GM10248 (cell line): ENCODE measurements at regions of chr3 and their contacts with region 1.

Region 1: GRCh38 chr3:100089812-100090668 is 24.3 kb downstream of the FILIP1L start:
- DNase-seq: peak; percentile 35
- CTCF ChIP-seq: no peak

Region 2: DNA sequence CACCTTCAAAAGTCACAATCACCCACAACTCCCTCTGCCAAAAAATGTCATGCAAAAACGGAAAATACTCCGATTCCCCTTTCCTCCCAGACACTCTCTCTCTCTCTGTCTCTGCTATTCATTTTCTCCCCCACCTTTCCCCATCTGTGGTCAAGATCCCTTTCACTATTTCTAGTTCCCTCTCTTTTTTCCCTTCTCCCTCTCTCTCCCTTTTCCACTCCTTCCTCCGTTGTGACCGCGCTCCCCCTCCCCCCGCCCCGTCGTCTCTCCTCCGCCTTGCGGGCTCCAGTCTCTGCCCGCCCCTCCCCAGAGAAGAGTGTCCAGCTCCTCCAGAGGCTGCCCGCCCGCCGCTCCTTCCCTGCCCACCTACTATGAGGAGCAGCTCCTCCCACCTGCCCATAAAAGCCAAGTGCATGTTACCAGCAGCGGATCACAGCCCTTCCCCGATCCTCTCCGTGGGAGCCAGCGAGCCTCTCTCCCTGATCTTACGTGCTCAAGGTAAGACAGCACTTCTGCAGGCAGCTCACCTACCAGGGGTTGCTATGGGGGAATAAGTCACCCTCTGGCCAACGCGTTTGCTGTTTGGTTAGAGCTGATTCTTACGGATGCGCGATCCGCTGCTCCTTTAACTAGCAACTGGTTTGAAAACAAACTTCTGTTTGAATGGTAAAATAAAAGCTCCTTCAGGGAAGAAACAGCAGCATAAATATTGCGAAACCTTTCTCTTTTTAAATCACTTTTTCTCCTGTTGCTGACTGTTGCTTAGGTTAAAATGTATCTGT is 451.7 kb before region 1 on chr3 and contains the start of gene COL8A1:
- CTCF ChIA-PET with region 1: no interaction called
- POLR2A ChIA-PET with region 1: no interaction called
- DNase-seq: no peak
- CTCF ChIP-seq: no peak

Region 3: GRCh38 chr3:100073899-100074307 is 16.1 kb before region 1 on chr3:
- CTCF ChIA-PET with region 1: interaction called, 31 read pairs
- POLR2A ChIA-PET with region 1: no interaction called
- DNase-seq: no peak
- CTCF ChIP-seq: no peak

Region 4: GRCh38 chr3:100103558-100104441 is 13.8 kb after region 1 on chr3:
- CTCF ChIA-PET with region 1: interaction called, 49 read pairs
- POLR2A ChIA-PET with region 1: no interaction called
- DNase-seq: peak; percentile 36
- CTCF ChIP-seq: no peak